Natural killer cell (primary cell): ENCODE measurements at regions of chr1 and their contacts with region 1.

Region 1: DNA sequence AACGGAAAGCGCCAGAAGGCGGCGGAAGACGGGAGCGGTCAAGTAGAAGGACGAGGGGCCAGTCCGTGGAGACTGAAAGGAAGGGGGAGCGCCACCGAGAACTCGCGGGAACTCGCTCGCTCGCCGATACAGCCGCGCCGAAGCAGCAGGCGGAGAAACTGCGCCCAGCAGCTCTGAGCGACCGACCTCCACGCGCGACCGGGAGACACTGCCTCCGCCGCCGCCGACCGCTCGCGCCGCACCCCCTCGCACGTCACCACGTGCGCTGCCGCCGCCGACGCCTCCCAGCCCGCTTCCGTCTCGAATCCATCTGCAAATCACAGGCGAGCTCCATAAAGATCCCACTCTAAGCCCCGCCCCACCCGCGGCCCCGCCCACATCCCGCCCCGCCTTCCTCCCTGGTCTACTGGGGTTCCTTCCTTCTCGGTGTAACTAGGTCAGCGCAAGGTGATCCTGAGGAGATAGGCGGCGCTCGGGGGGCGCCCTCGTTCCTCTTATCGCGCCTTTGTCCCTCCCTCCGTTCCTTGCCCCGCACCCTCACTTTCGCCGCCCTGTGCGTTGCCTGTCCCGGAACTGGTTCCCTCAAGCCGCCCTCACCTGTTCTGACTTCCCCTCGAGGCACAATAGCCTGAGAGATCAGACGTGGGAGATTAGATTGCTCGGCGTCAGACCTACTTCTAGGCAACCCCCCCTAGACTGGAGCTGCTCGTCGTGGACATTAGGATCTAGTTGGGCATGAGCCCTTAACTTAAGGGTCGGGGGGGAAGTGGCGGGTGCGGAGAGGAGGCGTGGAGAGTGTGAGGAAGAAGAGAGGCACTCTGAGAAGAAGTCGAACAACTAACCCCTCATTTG is at the start of gene IVNS1ABP:
- DNase-seq: peak; percentile 92 to 97
- ATAC-seq: peak; percentile 70 to 89 (median 76)
- H3K4me3 ChIP-seq: peak within 1 kb of the TSS; percentile 99
- H3K4me3 Mint-ChIP-seq: peak within 1 kb of the TSS; percentile 95
- H3K27ac ChIP-seq: peak within 1 kb of the TSS; percentile 100
- H3K27ac Mint-ChIP-seq: peak within 1 kb of the TSS; percentile 98 to 99
- H3K4me1 ChIP-seq: peaks cover 13% of the 10 kb centered on the region
- H3K4me1 Mint-ChIP-seq: peaks cover 52 to 58% of the 10 kb centered on the region in 2 donors
- H3K27me3 ChIP-seq: no peaks in the 10 kb centered on the region
- H3K27me3 Mint-ChIP-seq: no peaks in the 10 kb centered on the region
- CTCF ChIP-seq: no peak
- total RNA-seq, gene IVNS1ABP: 250 to 394 (median 299) TPM

Region 2: DNA sequence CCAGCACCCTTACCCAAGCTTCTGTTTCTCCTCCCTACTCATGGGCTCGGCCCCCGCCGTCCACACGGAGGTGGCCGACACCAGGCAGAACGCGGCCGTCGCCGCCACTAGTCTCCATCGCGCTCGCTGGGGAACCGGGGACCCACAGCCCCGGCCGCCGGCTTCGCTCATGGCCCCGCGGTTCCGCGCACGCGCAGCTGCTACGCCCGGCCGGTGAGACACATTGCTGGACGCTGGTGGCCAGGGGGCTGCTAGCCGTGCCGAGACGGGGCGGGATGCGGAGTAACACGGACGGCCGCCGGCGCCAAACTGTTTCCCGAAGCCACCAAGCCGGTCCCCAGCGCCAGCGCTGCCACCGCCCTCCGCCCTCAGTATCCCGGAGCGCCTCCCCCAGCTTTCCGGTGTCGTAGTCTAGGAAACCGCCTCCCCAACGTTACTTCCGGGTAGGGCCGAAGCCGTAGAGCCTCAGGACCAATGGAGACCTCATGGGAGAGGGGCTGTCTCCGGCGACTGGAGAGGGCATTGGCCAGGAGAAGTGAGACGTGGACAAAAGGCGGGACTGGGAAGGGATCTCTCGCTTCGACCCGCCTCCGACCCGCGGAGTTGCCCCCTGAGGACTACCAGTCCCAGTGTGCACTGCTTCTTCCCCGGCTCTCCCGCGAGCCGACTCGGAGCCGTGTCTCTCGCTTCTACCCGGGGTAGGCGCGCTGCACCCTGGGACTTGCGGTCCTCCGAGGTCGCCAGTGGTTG is 562.6 kb before region 1 on chr1 and contains the start of gene EDEM3:
- intact Hi-C with region 1: loop called (anchors 5 kb)
- DNase-seq: peak; percentile 93 to 99
- ATAC-seq: peak; percentile 91 to 99 (median 92)
- H3K4me3 ChIP-seq: peak within 1 kb of the TSS; percentile 92
- H3K4me3 Mint-ChIP-seq: peak within 1 kb of the TSS; percentile 96
- H3K27ac ChIP-seq: peak within 1 kb of the TSS; percentile 87
- H3K27ac Mint-ChIP-seq: peak within 1 kb of the TSS; percentile 80 to 96
- H3K4me1 ChIP-seq: peaks cover 6% of the 10 kb centered on the region
- H3K4me1 Mint-ChIP-seq: peaks cover 32 to 33% of the 10 kb centered on the region in 2 donors
- H3K27me3 ChIP-seq: no peaks in the 10 kb centered on the region
- H3K27me3 Mint-ChIP-seq: peaks cover 0 to 20% of the 10 kb centered on the region in 2 donors
- CTCF ChIP-seq: no peak
- total RNA-seq, gene EDEM3: 8.9 to 15.4 (median 15.1) TPM

Region 3: DNA sequence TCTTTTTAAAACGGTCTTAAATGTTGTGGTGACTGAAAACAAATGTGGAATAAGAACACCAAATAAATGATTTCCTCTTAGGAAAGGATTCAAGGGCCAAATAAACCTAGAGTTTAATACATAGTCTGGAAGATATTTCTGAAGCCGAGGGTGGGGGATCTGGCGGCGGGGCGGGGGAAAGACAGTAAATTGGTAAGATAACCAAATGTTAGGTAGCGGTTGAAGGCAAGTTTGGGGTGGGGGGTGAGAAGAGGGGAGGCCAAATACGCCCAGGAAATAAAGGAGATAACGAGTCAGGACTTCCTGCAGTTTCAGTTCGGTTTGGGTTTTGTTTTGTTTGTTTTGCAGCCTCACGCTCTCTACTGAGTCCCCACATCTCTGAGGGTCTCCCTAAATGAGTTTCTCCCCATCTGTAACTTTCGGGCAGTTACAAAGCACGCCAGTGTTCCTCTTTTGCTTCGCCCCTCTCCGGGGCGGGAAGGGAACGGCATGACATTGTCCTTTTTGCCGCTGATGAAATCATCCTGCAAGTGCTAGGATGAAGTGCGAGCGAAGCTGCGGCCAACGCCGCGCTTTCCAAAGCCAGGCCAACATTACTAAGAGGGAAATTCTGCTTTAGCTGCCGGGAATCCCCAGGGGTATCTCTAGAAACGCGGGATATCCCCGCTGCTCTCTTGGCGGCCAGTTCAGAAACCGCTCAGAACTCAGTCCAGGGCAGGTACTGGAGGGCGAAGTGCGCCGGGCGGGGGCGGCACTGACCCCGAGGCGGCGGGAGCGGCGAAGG is 343.8 kb before region 1 on chr1:
- intact Hi-C with region 1: loop called (anchors 5 kb)
- DNase-seq: peak in 1 of 2 donors; percentile 87
- ATAC-seq: peak; percentile 70 to 77 (median 74)
- H3K4me3 ChIP-seq: peak overlapping the region; percentile 64
- H3K4me3 Mint-ChIP-seq: peak overlapping the region; percentile 93
- H3K27ac ChIP-seq: peak overlapping the region; percentile 80
- H3K27ac Mint-ChIP-seq: peak overlapping the region; percentile 37 to 63
- H3K4me1 ChIP-seq: peaks cover 25% of the 10 kb centered on the region
- H3K4me1 Mint-ChIP-seq: peaks cover 43 to 55% of the 10 kb centered on the region in 2 donors
- H3K27me3 ChIP-seq: no peaks in the 10 kb centered on the region
- H3K27me3 Mint-ChIP-seq: no peaks in the 10 kb centered on the region
- CTCF ChIP-seq: no peak

Region 4: GRCh38 chr1:185338719-185339622 is 21.7 kb after region 1 on chr1:
- intact Hi-C with region 1: loop called (anchors 1 kb)
- DNase-seq: peak; percentile 39 to 71
- ATAC-seq: peak; percentile 81 to 88 (median 84)
- H3K4me3 ChIP-seq: no peak overlapping the region
- H3K4me3 Mint-ChIP-seq: peak overlapping the region; percentile 76
- H3K27ac ChIP-seq: peak overlapping the region; percentile 63
- H3K27ac Mint-ChIP-seq: peak overlapping the region; percentile 83 to 84
- H3K4me1 ChIP-seq: peaks cover 25% of the 10 kb centered on the region
- H3K4me1 Mint-ChIP-seq: peaks cover 39 to 44% of the 10 kb centered on the region in 2 donors
- H3K27me3 ChIP-seq: no peaks in the 10 kb centered on the region
- H3K27me3 Mint-ChIP-seq: no peaks in the 10 kb centered on the region
- CTCF ChIP-seq: no peak

Region 5: DNA sequence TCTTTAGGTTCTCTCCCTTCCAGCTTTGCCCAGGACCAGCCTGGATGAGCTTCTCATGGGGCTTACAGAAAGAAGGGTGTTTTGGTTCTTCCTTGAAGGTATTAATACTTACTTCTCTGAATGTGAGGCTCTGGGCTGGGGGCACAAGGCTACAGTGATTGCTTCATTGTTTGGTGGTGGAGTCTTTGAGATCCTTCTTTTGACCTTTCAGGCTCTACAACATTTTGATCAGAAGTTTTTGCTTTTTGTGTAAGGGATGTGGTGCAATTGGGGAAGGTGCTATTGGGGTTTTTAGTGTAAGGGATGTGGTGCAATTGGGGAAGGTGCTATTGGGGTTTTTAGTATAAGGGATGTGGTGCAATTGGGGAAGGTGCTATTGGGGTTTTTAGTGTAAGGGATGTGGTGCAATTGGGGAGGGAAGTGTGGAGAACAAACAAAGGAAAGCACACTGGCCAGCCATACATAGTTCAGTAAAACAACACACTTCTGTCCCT is 103.4 kb after region 1 on chr1:
- intact Hi-C with region 1: loop called (anchors 1 kb)
- DNase-seq: peak; percentile 26 to 72
- ATAC-seq: peak; percentile 85 to 91 (median 91)
- H3K4me3 ChIP-seq: no peak overlapping the region
- H3K4me3 Mint-ChIP-seq: peak overlapping the region; percentile 81
- H3K27ac ChIP-seq: peak overlapping the region; percentile 78
- H3K27ac Mint-ChIP-seq: peak overlapping the region; percentile 84 to 98
- H3K4me1 ChIP-seq: peaks cover 31% of the 10 kb centered on the region
- H3K4me1 Mint-ChIP-seq: peaks cover 58 to 67% of the 10 kb centered on the region in 2 donors
- H3K27me3 ChIP-seq: no peaks in the 10 kb centered on the region
- H3K27me3 Mint-ChIP-seq: no peaks in the 10 kb centered on the region
- CTCF ChIP-seq: no peak

Region 6: GRCh38 chr1:185566995-185567394 is 249.7 kb after region 1 on chr1:
- intact Hi-C with region 1: loop called (anchors 1 kb)
- DNase-seq: peak in 1 of 2 donors; percentile 94
- ATAC-seq: peak; percentile 81 to 89 (median 86)
- H3K4me3 ChIP-seq: no peak overlapping the region
- H3K4me3 Mint-ChIP-seq: peak overlapping the region; percentile 90
- H3K27ac ChIP-seq: peak overlapping the region; percentile 92
- H3K27ac Mint-ChIP-seq: peak overlapping the region; percentile 91 to 99
- H3K4me1 ChIP-seq: peaks cover 11% of the 10 kb centered on the region
- H3K4me1 Mint-ChIP-seq: peaks cover 41 to 51% of the 10 kb centered on the region in 2 donors
- H3K27me3 ChIP-seq: no peaks in the 10 kb centered on the region
- H3K27me3 Mint-ChIP-seq: no peaks in the 10 kb centered on the region
- CTCF ChIP-seq: no peak